ENCODE measurements at regions of chr10 and their contacts with region 1.

Region 1: GRCh38 chr10:13787015-13787421 is 200.3 kb downstream of the PRPF18 start:
- DNase-seq: no peak
- ATAC-seq: no peak
- H3K4me3 ChIP-seq: no peak overlapping the region
- H3K27ac ChIP-seq: no peak overlapping the region
- H3K4me1 ChIP-seq: peaks cover 7% of the 10 kb centered on the region
- H3K27me3 ChIP-seq: no peaks in the 10 kb centered on the region
- CTCF ChIP-seq: no peak

Region 2: GRCh38 chr10:13994932-13995331 is 207.9 kb after region 1 on chr10:
- CTCF ChIA-PET with region 1: no interaction called
- POLR2A ChIA-PET with region 1: no interaction called
- intact Hi-C with region 1: loop called (anchors 5 kb)
- DNase-seq: no peak
- ATAC-seq: peak; percentile 40; the same call in 1 of the 2 replicates
- H3K4me3 ChIP-seq: no peak overlapping the region
- H3K27ac ChIP-seq: no peak overlapping the region
- H3K4me1 ChIP-seq: no peaks in the 10 kb centered on the region
- H3K27me3 ChIP-seq: no peaks in the 10 kb centered on the region
- CTCF ChIP-seq: 0 out of 2 replicates have a peak, but pooled peaks have one; percentile 11

Region 3: DNA sequence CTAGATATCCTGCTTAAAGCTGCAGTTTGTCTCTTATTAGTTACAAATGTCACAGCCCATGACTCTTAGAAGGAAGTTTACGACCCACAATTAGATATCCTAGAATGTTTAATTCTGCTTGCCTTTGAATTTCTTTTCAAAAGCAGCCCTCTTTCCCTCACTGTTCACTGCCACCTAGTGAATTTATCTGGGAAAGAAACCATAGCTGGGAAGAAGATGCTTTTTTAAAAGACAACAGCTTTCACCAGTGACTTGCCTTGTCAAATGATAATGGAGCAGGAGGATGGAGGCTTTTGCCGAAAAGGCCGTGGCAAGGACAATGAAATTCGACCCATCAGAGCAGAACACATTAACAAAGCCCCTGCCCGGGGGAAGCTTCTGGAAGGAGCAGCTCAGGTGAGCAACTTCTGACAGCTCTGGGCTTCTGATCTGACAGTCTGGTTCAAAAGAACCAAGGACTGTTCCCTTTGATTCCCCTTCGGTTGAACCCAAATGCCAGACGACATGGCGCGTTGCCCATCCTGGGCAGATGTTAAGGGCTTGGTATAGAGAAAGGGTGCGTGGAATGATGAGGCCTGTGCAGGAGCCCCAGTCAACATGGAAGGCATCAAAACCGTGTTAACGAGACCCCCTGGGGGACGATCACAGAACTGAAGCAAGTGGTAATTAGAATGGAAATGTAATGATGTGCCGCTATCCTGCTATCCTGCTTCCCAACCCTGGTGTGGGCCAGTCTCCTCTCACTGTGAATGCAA is 306.9 kb after region 1 on chr10:
- CTCF ChIA-PET with region 1: interaction called, 3 read pairs
- POLR2A ChIA-PET with region 1: no interaction called
- intact Hi-C with region 1: loop called (anchors 1 kb)
- DNase-seq: peak; percentile 43
- ATAC-seq: peak; percentile 35
- H3K4me3 ChIP-seq: no peak overlapping the region
- H3K27ac ChIP-seq: no peak overlapping the region
- H3K4me1 ChIP-seq: no peaks in the 10 kb centered on the region
- H3K27me3 ChIP-seq: no peaks in the 10 kb centered on the region
- CTCF ChIP-seq: peak; percentile 60

Region 4: GRCh38 chr10:14111208-14111607 is 324.2 kb after region 1 on chr10:
- CTCF ChIA-PET with region 1: no interaction called
- POLR2A ChIA-PET with region 1: no interaction called
- intact Hi-C with region 1: no loop called
- DNase-seq: no peak
- ATAC-seq: no peak
- H3K4me3 ChIP-seq: no peak overlapping the region
- H3K27ac ChIP-seq: no peak overlapping the region
- H3K4me1 ChIP-seq: no peaks in the 10 kb centered on the region
- H3K27me3 ChIP-seq: 0 out of 2 replicates have a peak, but pooled peaks cover 3% of the 10 kb centered on the region
- CTCF ChIP-seq: no peak

Measured in PC-3 (cell line).